Activated naive CD8-positive, alpha-beta T cell treated with anti-CD3 and anti-CD28 coated beads, Interleukin-2, amount 10 ng/mL, durations not matched to agents 7 days and 5 days (primary cell): ENCODE measurements at regions of chr12 and their contacts with region 1.

Region 1: GRCh38 chr12:68135520-68135919 is 24.0 kb downstream of the IFNG start:
- DNase-seq: no peak
- ATAC-seq: no peak
- H3K4me3 Mint-ChIP-seq: no peak overlapping the region
- H3K27ac Mint-ChIP-seq: no peak overlapping the region
- H3K4me1 Mint-ChIP-seq: peaks cover 45% of the 10 kb centered on the region
- H3K27me3 Mint-ChIP-seq: no peaks in the 10 kb centered on the region

Region 2: DNA sequence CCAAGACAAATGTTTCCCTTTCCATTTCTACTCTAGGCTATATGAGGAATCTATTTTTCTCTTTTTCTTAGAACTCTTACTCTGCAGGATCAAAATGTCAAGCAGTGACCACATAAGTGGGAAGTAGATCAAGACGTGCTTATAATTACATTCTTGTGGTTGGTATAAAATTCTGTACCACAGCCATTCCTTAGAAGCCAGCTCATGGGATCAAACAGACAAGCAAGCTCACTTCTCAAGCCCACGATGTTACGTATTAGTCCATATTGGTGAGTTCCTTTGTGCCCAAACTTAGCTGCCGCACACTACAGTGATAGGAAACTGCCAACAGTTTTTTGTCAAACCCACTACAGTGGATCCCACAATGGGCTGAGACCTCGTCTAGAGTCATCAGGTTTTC is 29.4 kb before region 1 on chr12:
- POLR2A ChIA-PET with region 1: no interaction called
- DNase-seq: no peak
- ATAC-seq: no peak
- H3K4me3 Mint-ChIP-seq: no peak overlapping the region
- H3K27ac Mint-ChIP-seq: no peak overlapping the region
- H3K4me1 Mint-ChIP-seq: no peaks in the 10 kb centered on the region
- H3K27me3 Mint-ChIP-seq: no peaks in the 10 kb centered on the region

Region 3: DNA sequence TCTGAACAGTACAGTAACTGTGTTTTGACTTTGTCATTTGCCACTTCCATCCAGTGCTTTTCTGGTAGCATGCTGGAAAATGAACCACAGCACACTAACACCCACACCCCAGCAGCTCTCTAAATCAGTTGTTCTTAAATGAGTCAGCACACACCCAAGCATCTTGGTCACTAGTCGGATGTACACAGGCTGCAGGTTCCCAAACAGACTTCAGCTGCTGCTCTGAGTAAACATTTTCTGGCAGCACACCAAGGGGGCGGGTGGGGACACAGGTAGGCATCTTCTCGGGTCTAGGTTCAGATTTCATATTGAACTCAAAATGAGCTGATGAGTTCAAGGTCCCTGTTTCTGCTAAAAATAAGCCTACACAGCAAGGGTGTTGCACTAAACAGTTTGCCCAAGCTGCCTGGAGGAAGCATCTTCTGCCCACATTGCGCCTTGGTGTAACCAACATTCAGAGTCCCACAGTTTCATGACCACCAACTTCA is 15.8 kb before region 1 on chr12:
- POLR2A ChIA-PET with region 1: interaction called, 11 read pairs
- DNase-seq: peak; percentile 50
- ATAC-seq: peak; percentile 93
- H3K4me3 Mint-ChIP-seq: peak overlapping the region; percentile 19
- H3K27ac Mint-ChIP-seq: peak overlapping the region; percentile 39
- H3K4me1 Mint-ChIP-seq: peaks cover 36% of the 10 kb centered on the region
- H3K27me3 Mint-ChIP-seq: no peaks in the 10 kb centered on the region

Region 4: DNA sequence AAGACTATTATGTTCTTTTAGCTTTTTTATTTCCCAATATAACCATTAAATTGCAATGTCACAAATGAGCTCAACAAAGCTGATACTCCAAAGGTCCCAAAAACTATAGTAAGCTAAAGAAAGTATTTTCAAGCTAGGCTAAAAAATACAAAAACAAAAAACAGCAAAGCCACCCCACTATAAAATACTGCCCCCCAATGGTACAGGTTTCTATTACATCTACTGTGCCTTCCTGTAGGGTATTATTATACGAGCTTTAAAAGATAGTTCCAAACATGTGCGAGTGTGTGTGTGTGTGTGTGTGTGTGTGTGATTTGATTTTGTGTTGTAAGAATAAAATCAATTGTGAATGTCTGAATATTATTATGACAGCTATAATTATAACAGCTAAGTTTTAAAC is 22.9 kb after region 1 on chr12:
- POLR2A ChIA-PET with region 1: no interaction called
- DNase-seq: no peak
- ATAC-seq: no peak
- H3K4me3 Mint-ChIP-seq: no peak overlapping the region
- H3K27ac Mint-ChIP-seq: no peak overlapping the region
- H3K4me1 Mint-ChIP-seq: peaks cover 32% of the 10 kb centered on the region
- H3K27me3 Mint-ChIP-seq: no peaks in the 10 kb centered on the region

Region 5: GRCh38 chr12:68393417-68393816 is 257.9 kb after region 1 on chr12:
- POLR2A ChIA-PET with region 1: no interaction called
- DNase-seq: no peak
- ATAC-seq: no peak
- H3K4me3 Mint-ChIP-seq: no peak overlapping the region
- H3K27ac Mint-ChIP-seq: no peak overlapping the region
- H3K4me1 Mint-ChIP-seq: peaks cover 4% of the 10 kb centered on the region
- H3K27me3 Mint-ChIP-seq: no peaks in the 10 kb centered on the region